ENCODE measurements at regions of chr22 and their contacts with region 1.

Region 1: DNA sequence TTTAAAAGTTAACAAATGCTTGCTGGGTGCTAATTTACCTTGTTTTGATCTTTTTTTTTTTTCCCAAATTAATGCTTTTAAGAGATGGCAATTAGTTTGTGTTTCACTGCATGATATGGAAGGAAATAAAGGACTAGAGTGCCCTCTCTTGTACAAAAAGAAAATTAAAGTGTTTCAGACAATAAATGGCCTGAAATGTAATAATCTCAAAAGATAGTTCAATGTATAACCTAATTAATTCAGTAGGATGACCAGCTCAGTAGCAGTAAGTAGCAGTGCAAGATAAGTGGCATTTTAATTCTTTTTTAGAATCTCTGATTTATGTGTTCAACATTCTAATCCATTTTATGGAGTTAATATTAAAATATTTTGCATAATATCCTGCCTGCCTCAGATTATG is 39.9 kb upstream of the MYO18B start:
- DNase-seq: peak; percentile 61
- H3K4me3 ChIP-seq: no peak overlapping the region
- H3K27ac ChIP-seq: peak overlapping the region in 1 of 2 experiments; percentile 93; a peak in 3 of 4 replicates
- H3K4me1 ChIP-seq: peaks cover 0 to 55% of the 10 kb centered on the region in 2 experiments; a peak in 2 of 4 replicates
- H3K27me3 ChIP-seq: no peaks in the 10 kb centered on the region
- CTCF ChIP-seq: peak; percentile 71
- EP300 ChIP-seq: peak in 1 of 2 experiments; percentile 74; a peak in 2 of 4 replicates
- RAD21 ChIP-seq: peak; percentile 90

Region 2: GRCh38 chr22:25235547-25236290 is 466.3 kb before region 1 on chr22:
- CTCF ChIA-PET with region 1: interaction called, 23 read pairs
- POLR2A ChIA-PET with region 1: no interaction called
- DNase-seq: peak; percentile 100
- H3K4me3 ChIP-seq: peak overlapping the region in 1 of 2 experiments; percentile 38; a peak in 3 of 4 replicates
- H3K27ac ChIP-seq: no peak overlapping the region
- H3K4me1 ChIP-seq: peaks cover 0 to 4% of the 10 kb centered on the region in 2 experiments; a peak in 1 of 4 replicates
- H3K27me3 ChIP-seq: no peaks in the 10 kb centered on the region
- CTCF ChIP-seq: peak; percentile 72
- EP300 ChIP-seq: no peak
- RAD21 ChIP-seq: peak; percentile 96

Region 3: GRCh38 chr22:25461301-25461700 is 240.7 kb before region 1 on chr22:
- CTCF ChIA-PET with region 1: interaction called, 32 read pairs
- POLR2A ChIA-PET with region 1: no interaction called
- DNase-seq: no peak
- H3K4me3 ChIP-seq: no peak overlapping the region
- H3K27ac ChIP-seq: no peak overlapping the region
- H3K4me1 ChIP-seq: no peaks in the 10 kb centered on the region; a peak in 1 of 4 replicates
- H3K27me3 ChIP-seq: no peaks in the 10 kb centered on the region
- CTCF ChIP-seq: no peak
- EP300 ChIP-seq: no peak
- RAD21 ChIP-seq: no peak

Region 4: DNA sequence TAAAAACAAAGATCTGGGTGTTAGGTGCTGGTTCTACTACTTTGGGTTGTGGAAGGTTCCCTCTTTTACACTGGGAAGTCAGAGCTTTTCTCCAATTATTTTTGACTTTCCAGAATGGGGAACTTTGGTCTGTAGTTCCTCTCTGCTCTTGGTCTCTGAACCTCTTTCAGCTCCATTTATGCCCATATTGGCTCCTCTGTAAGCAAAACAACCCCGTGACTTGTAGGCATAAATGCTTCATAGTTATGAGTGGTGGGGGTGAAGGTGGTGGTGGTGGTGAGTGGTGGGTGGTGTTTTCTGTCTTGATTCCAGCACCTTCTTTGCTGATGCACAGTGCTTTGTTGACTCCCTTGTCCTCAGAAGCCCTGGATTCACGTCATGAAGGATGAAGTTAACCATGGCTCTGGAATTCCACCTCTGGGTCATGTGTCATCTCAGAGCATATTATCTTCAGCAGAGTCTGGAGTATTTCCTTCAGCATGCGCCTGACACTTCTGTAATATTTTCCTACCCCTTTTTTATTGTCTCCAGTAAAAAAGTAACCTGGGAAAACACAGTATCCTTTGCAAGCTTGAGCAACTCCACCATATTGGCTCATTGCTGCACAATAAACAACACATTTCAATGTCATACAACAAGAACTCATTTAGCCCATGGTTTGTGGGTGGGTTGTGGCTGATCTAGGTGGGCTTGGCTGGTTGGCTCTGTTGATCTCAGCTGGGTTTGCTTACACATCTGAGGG is 161.7 kb before region 1 on chr22:
- CTCF ChIA-PET with region 1: interaction called, 41 read pairs
- POLR2A ChIA-PET with region 1: interaction called, 3 read pairs
- DNase-seq: no peak
- H3K4me3 ChIP-seq: no peak overlapping the region
- H3K27ac ChIP-seq: no peak overlapping the region
- H3K4me1 ChIP-seq: no peaks in the 10 kb centered on the region; a peak in 2 of 4 replicates
- H3K27me3 ChIP-seq: no peaks in the 10 kb centered on the region
- CTCF ChIP-seq: no peak
- EP300 ChIP-seq: no peak
- RAD21 ChIP-seq: no peak

Region 5: GRCh38 chr22:25564320-25564978 is 137.6 kb before region 1 on chr22 and contains the start of gene GRK3:
- CTCF ChIA-PET with region 1: interaction called, 17 read pairs
- POLR2A ChIA-PET with region 1: interaction called, 7 read pairs
- DNase-seq: peak; percentile 95
- H3K4me3 ChIP-seq: peak within 1 kb of the TSS; percentile 75 to 88
- H3K27ac ChIP-seq: peak within 1 kb of the TSS in 1 of 2 experiments; percentile 96; a peak in 2 of 4 replicates
- H3K4me1 ChIP-seq: peaks cover 5 to 16% of the 10 kb centered on the region in 2 experiments; a peak in 2 of 4 replicates
- H3K27me3 ChIP-seq: peaks cover 6% of the 10 kb centered on the region; the same call in 1 of the 2 replicates
- CTCF ChIP-seq: no peak
- EP300 ChIP-seq: no peak
- RAD21 ChIP-seq: no peak
- polyA plus RNA-seq, gene GRK3: 1.3 and 1.9 TPM in 2 replicates

Region 6: GRCh38 chr22:25572708-25573171 is 129.3 kb before region 1 on chr22:
- CTCF ChIA-PET with region 1: interaction called, 17 read pairs
- POLR2A ChIA-PET with region 1: interaction called, 3 read pairs
- DNase-seq: no peak
- H3K4me3 ChIP-seq: no peak overlapping the region
- H3K27ac ChIP-seq: peak overlapping the region in 1 of 2 experiments; percentile 34; a peak in 1 of 4 replicates
- H3K4me1 ChIP-seq: peaks cover 0 to 16% of the 10 kb centered on the region in 2 experiments; a peak in 2 of 4 replicates
- H3K27me3 ChIP-seq: no peaks in the 10 kb centered on the region
- CTCF ChIP-seq: no peak
- EP300 ChIP-seq: no peak
- RAD21 ChIP-seq: no peak

Region 7: GRCh38 chr22:25714739-25715138 is 12.7 kb after region 1 on chr22:
- CTCF ChIA-PET with region 1: interaction called, 11 read pairs
- POLR2A ChIA-PET with region 1: no interaction called
- DNase-seq: no peak
- H3K4me3 ChIP-seq: no peak overlapping the region
- H3K27ac ChIP-seq: no peak overlapping the region
- H3K4me1 ChIP-seq: no peaks in the 10 kb centered on the region; a peak in 2 of 4 replicates
- H3K27me3 ChIP-seq: no peaks in the 10 kb centered on the region
- CTCF ChIP-seq: no peak
- EP300 ChIP-seq: no peak
- RAD21 ChIP-seq: no peak

Measured in SK-N-SH (cell line).